Activated B cell treated with CpG ODN at 0.5 μM for 24 hours (primary cell): ENCODE measurements at regions of chr11 and their contacts with region 1.

Region 1: GRCh38 chr11:130213143-130213978 is 53.8 kb downstream of the ST14 start:
- DNase-seq: peak; percentile 77
- ATAC-seq: peak; percentile 99
- H3K4me3 Mint-ChIP-seq: no peak overlapping the region
- H3K27ac Mint-ChIP-seq: no peak overlapping the region
- H3K4me1 Mint-ChIP-seq: peaks cover 6% of the 10 kb centered on the region
- H3K27me3 Mint-ChIP-seq: no peaks in the 10 kb centered on the region
- CTCF ChIP-seq: peak; percentile 73

Region 2: GRCh38 chr11:130189492-130190210 is 23.7 kb before region 1 on chr11:
- CTCF ChIA-PET with region 1: no interaction called
- POLR2A ChIA-PET with region 1: no interaction called
- intact Hi-C with region 1: no loop called
- DNase-seq: no peak
- ATAC-seq: peak; percentile 18
- H3K4me3 Mint-ChIP-seq: no peak overlapping the region
- H3K27ac Mint-ChIP-seq: no peak overlapping the region
- H3K4me1 Mint-ChIP-seq: no peaks in the 10 kb centered on the region
- H3K27me3 Mint-ChIP-seq: no peaks in the 10 kb centered on the region
- CTCF ChIP-seq: no peak

Region 3: DNA sequence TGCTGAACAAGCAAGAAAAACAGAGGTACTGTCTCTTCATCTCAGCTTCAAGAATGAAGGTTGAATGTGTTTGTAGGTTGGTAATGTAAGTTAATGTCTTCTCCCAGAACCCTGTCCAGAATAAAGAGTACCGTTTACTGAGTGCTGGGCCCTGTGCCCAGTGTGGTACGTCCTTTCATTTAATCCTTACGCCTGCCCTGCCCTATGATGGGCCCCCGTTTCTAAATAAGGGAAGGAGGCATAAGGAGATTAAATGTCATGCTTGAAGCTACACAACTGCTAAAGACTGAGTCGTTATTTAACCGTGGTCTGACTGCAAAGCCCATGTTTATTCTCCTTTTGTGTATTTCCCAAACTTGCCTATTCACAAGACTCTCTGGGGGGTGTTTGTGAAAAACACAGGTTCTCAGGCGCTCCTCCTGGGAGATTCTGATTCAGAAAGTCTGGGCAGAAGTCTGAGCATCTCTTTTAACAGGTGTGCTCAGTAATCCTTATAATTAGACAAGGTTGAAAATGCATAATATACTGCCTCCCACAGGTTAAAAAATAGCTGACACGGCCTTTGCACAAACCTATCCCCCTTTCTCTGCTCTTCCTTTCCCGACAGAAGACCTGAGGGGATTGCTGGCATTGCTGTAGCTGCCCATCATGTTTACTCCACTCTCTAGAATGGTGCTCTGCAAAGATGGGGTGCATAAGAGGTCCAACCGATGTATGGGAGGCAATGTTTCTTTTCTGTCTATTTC is 157.7 kb after region 1 on chr11:
- CTCF ChIA-PET with region 1: interaction called, 22 read pairs
- POLR2A ChIA-PET with region 1: no interaction called
- intact Hi-C with region 1: loop called (anchors 1 kb)
- DNase-seq: no peak
- ATAC-seq: no peak
- H3K4me3 Mint-ChIP-seq: no peak overlapping the region
- H3K27ac Mint-ChIP-seq: no peak overlapping the region
- H3K4me1 Mint-ChIP-seq: no peaks in the 10 kb centered on the region
- H3K27me3 Mint-ChIP-seq: peaks cover 6% of the 10 kb centered on the region
- CTCF ChIP-seq: no peak

Region 4: DNA sequence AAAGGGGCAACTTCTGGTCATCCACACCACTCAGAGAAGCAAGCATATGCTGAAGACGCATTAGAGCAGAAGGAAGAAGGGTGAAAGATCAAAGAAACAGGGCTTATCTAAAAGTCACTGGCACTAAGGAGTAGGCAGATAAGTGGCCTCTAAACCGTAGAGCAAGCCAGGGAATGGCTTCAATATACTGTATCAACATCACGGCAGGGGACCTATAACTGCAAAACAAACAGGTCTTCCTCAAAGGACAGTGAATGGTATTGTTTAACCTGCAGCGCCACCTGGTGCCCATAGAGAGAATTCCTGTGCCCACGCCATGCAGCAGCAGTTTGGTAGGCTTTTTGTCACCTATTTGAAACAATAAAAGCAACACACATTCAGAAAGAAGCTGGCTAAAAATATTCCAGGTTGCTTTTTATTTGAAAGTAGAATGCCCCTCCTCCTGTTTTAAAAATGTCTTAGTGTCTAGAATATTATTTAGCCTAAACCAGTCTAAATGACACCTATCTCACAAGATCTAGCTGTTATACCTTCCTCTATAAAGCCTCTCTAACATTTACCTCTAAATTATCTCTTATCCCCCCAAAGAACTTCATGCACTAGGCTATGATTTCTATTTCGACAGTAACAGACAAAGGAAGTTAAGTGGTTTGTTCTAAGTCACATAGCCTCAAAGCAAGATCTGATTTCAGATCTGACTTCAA is 681.1 kb after region 1 on chr11:
- CTCF ChIA-PET with region 1: no interaction called
- POLR2A ChIA-PET with region 1: no interaction called
- intact Hi-C with region 1: loop called (anchors 1 kb)
- DNase-seq: peak; percentile 38
- ATAC-seq: peak; percentile 84
- H3K4me3 Mint-ChIP-seq: no peak overlapping the region
- H3K27ac Mint-ChIP-seq: no peak overlapping the region
- H3K4me1 Mint-ChIP-seq: no peaks in the 10 kb centered on the region
- H3K27me3 Mint-ChIP-seq: no peaks in the 10 kb centered on the region
- CTCF ChIP-seq: peak; percentile 61